ENCODE measurements at regions of chr5 and their contacts with region 1.

Region 1: GRCh38 chr5:126339215-126339805 is 83.9 kb upstream of the GRAMD2B start:
- DNase-seq: peak; percentile 73
- H3K4me3 Mint-ChIP-seq: no peak overlapping the region
- H3K27ac Mint-ChIP-seq: no peak overlapping the region
- H3K4me1 Mint-ChIP-seq: no peaks in the 10 kb centered on the region
- H3K27me3 Mint-ChIP-seq: peaks cover 14% of the 10 kb centered on the region

Region 2: DNA sequence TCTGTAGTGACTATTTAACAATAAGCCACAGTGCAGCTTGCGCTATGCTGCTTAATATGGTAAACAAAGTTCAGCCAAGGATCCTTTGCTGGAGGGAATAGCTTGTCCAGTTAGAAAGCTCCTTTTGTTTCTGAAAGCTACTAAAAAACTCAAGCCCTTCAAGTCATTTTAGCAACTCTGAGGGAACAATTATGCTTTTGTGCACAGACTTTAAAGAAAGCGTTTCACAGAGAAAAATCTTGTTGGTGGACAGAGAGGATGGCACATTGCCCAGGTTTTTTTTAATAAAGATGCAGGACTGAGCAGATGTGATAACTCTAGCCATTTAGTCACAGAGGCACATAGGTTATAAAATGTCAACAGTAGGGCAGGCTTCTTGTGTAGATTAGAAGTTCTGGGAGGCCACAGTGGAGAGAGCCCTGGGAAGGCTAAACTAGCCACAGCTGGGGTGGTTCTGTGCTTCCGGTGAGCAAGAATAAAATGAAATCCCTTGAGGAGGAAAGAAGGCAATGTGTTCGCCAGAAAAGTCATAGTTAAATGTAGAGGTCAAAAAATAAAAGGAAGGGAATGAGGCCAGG is 192.3 kb after region 1 on chr5:
- CTCF ChIA-PET with region 1: interaction called, 34 read pairs
- intact Hi-C with region 1: no loop called
- DNase-seq: no peak
- H3K4me3 Mint-ChIP-seq: no peak overlapping the region
- H3K27ac Mint-ChIP-seq: no peak overlapping the region
- H3K4me1 Mint-ChIP-seq: no peaks in the 10 kb centered on the region
- H3K27me3 Mint-ChIP-seq: no peaks in the 10 kb centered on the region

Region 3: DNA sequence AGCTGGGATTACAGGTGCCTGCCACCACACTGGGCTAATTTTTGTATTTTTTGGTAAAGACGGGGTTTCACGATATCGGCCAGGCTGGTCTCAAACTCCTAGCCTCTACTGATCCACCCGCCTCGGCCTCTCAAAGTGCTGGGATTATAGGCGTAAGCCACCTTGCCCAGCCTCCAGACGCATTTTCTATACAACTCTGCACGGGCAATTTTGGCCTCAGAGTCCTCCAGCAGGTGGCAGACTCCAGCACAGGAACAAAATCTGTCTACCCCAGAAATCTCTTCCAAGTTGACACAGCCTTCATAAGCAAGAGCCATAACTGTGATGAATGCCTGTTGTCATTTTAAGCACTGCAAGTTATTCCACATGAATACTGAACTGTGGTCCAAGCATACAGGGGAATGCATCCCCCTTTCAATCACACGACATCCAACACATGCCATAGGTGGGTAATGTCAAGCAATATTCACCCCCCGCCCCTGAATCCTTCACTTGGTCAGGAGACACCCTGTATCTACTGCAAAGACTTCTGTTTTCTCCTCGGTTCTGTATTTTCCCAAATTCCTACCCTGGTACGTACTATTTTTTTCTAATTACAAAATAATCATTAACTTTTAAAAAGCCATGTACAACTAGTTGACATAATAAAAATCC is 204.9 kb after region 1 on chr5:
- CTCF ChIA-PET with region 1: interaction called, 66 read pairs
- intact Hi-C with region 1: loop called (anchors 1 kb)
- DNase-seq: peak; percentile 68
- H3K4me3 Mint-ChIP-seq: no peak overlapping the region
- H3K27ac Mint-ChIP-seq: no peak overlapping the region
- H3K4me1 Mint-ChIP-seq: no peaks in the 10 kb centered on the region
- H3K27me3 Mint-ChIP-seq: no peaks in the 10 kb centered on the region

Region 4: GRCh38 chr5:126656396-126657007 is 317.2 kb after region 1 on chr5:
- CTCF ChIA-PET with region 1: no interaction called
- intact Hi-C with region 1: loop called (anchors 5 kb)
- DNase-seq: peak; percentile 48
- H3K4me3 Mint-ChIP-seq: no peak overlapping the region
- H3K27ac Mint-ChIP-seq: no peak overlapping the region
- H3K4me1 Mint-ChIP-seq: peaks cover 4% of the 10 kb centered on the region
- H3K27me3 Mint-ChIP-seq: no peaks in the 10 kb centered on the region